ENCODE measurements at regions of chrX and their contacts with region 1.

Region 1: DNA sequence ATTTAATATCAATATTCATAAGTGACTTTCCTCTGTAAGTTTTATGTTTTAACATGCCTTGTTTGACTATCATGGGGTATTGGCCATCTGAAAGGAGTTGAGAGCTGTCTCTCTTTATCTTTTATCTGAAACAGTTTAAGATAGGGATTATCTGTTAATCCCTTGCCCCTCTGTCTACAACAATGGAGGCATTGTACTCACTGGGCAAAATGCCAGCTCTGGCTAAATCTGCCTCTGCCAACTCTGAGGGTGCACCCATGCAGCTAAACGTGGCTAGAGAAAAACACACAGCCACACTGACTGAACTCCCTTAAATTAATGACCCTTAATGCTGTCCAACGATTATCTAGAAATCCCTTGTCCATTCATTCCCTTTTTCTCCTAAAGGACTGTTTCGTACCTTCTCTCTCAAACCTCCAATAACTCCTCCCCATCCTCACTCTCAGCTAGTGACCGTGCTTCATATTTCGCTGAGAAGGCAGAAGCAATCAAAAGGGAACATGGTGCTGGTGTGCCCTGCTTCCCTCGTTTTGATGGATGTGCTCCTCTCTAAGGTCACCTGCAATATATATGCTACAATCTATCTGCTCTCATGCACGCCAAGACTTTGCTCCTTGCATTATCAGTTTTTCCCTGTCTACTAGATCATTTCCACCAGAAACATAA is 10.3 kb downstream of the PHKA2 start:
- DNase-seq: no peak
- H3K4me3 Mint-ChIP-seq: no peak overlapping the region
- H3K27ac Mint-ChIP-seq: no peak overlapping the region
- H3K4me1 Mint-ChIP-seq: no peaks in the 10 kb centered on the region
- H3K27me3 Mint-ChIP-seq: no peaks in the 10 kb centered on the region

Region 2: GRCh38 chrX:18709843-18710242 is 263.8 kb before region 1 on chrX:
- CTCF ChIA-PET with region 1: interaction called, 10 read pairs
- intact Hi-C with region 1: no loop called
- DNase-seq: no peak
- H3K4me3 Mint-ChIP-seq: no peak overlapping the region
- H3K27ac Mint-ChIP-seq: no peak overlapping the region
- H3K4me1 Mint-ChIP-seq: peaks cover 2% of the 10 kb centered on the region
- H3K27me3 Mint-ChIP-seq: no peaks in the 10 kb centered on the region

Region 3: DNA sequence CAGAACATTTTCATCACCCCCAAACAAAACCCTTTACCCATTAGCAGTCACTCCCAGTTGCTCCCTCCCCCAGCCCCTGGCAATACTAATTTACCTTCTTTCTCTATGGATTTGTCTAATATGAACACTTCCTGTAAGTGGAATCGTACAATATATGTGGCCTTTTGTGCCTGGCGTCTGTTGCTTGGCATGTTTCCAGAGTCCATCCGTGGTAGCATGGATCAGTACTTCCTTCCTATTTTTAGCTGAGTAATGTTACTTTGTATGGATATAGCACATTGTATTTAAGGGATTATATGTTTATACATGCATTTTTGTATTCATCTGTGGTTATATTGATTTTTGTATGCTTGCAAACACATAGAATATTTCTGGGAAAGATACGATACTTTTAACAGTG is 218.0 kb before region 1 on chrX:
- CTCF ChIA-PET with region 1: no interaction called
- intact Hi-C with region 1: no loop called
- DNase-seq: no peak
- H3K4me3 Mint-ChIP-seq: no peak overlapping the region
- H3K27ac Mint-ChIP-seq: no peak overlapping the region
- H3K4me1 Mint-ChIP-seq: no peaks in the 10 kb centered on the region
- H3K27me3 Mint-ChIP-seq: no peaks in the 10 kb centered on the region